PC-3 (cell line): ENCODE measurements at regions of chr4 and their contacts with region 1.

Region 1: GRCh38 chr4:108060164-108060563 is 70.5 kb downstream of the HADH start:
- DNase-seq: peak; percentile 41
- ATAC-seq: peak; percentile 35
- H3K4me3 ChIP-seq: no peak overlapping the region
- H3K27ac ChIP-seq: no peak overlapping the region
- H3K4me1 ChIP-seq: peaks cover 16% of the 10 kb centered on the region
- H3K27me3 ChIP-seq: no peaks in the 10 kb centered on the region
- CTCF ChIP-seq: peak; percentile 54

Region 2: DNA sequence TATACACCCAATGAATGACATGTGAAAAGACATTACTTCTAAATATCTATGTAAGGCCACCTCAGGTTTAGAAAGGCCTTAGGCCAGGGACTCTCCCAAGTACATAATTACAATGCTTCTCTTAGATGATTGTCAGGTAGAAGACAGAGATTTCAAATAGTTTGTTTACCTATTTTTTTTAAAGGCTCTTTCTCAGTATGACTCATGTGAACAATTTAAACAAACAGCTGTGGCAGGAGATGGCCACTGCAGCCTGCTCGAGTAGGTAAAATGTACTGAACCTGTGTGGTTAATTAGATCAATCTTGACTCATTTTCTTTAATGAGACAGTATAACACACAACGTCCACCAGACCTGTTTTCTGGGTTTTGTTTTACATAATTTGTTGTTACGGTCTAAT is 58.3 kb after region 1 on chr4:
- CTCF ChIA-PET with region 1: no interaction called
- POLR2A ChIA-PET with region 1: no interaction called
- intact Hi-C with region 1: loop called (anchors 2 kb)
- DNase-seq: peak; percentile 74
- ATAC-seq: peak; percentile 92
- H3K4me3 ChIP-seq: peak overlapping the region; percentile 33; the same call in 1 of the 2 replicates
- H3K27ac ChIP-seq: peak overlapping the region; percentile 81
- H3K4me1 ChIP-seq: peaks cover 26% of the 10 kb centered on the region
- H3K27me3 ChIP-seq: no peaks in the 10 kb centered on the region
- CTCF ChIP-seq: no peak

Region 3: DNA sequence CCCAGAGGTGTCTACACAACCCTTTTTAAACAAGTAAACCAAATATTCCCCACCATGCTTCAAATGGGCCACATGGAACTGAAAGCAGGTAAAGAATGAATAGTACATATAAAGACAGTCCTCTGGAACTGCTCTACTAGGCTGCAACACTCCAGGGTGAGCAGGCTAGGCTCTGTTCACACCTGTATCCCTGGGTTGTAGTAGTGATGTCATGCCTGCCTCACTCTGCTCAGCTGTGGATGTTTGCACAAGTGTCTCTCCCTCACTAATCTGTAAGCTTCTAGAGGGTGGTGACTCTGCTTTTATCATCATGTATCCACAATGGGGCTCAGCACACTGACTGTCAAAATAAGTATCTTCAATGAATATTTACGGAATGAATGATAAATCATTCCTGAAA is 88.2 kb after region 1 on chr4:
- CTCF ChIA-PET with region 1: no interaction called
- POLR2A ChIA-PET with region 1: no interaction called
- intact Hi-C with region 1: no loop called
- DNase-seq: no peak
- ATAC-seq: no peak
- H3K4me3 ChIP-seq: no peak overlapping the region
- H3K27ac ChIP-seq: no peak overlapping the region
- H3K4me1 ChIP-seq: no peaks in the 10 kb centered on the region
- H3K27me3 ChIP-seq: no peaks in the 10 kb centered on the region
- CTCF ChIP-seq: no peak

Region 4: GRCh38 chr4:108168671-108169523 is 108.7 kb after region 1 on chr4 and contains the start of gene LEF1:
- CTCF ChIA-PET with region 1: no interaction called
- POLR2A ChIA-PET with region 1: no interaction called
- intact Hi-C with region 1: loop called (anchors 10 kb)
- DNase-seq: peak; percentile 20
- ATAC-seq: peak; percentile 39
- H3K4me3 ChIP-seq: peak within 1 kb of the TSS; percentile 69
- H3K27ac ChIP-seq: no peak within 1 kb of the TSS
- H3K4me1 ChIP-seq: no peaks in the 10 kb centered on the region
- H3K27me3 ChIP-seq: peaks cover 73% of the 10 kb centered on the region
- CTCF ChIP-seq: no peak
- total RNA-seq, gene LEF1: 0.58 and 2.4 TPM in 2 replicates

Region 5: DNA sequence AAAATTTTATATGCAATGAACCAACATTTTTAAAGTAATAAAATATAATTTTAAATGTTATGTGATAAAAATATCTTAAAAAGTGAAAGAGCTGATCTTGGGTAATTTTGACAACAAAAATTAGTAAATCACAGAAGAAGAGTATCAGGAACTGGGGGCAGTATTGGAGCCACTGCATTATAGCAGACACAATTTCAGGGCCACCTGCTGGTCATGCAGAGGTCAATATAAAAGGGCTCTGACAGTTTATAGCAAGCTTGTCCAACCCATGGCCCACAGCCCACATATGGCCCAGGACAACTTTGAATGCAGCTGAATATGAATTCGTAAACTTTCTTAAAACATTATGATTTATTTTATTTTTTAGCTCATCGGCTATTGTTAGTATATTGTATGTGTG is 121.5 kb after region 1 on chr4:
- CTCF ChIA-PET with region 1: no interaction called
- POLR2A ChIA-PET with region 1: no interaction called
- intact Hi-C with region 1: loop called (anchors 1 kb)
- DNase-seq: no peak
- ATAC-seq: peak; percentile 58
- H3K4me3 ChIP-seq: no peak overlapping the region
- H3K27ac ChIP-seq: no peak overlapping the region
- H3K4me1 ChIP-seq: no peaks in the 10 kb centered on the region
- H3K27me3 ChIP-seq: no peaks in the 10 kb centered on the region
- CTCF ChIP-seq: peak; percentile 35

Region 6: DNA sequence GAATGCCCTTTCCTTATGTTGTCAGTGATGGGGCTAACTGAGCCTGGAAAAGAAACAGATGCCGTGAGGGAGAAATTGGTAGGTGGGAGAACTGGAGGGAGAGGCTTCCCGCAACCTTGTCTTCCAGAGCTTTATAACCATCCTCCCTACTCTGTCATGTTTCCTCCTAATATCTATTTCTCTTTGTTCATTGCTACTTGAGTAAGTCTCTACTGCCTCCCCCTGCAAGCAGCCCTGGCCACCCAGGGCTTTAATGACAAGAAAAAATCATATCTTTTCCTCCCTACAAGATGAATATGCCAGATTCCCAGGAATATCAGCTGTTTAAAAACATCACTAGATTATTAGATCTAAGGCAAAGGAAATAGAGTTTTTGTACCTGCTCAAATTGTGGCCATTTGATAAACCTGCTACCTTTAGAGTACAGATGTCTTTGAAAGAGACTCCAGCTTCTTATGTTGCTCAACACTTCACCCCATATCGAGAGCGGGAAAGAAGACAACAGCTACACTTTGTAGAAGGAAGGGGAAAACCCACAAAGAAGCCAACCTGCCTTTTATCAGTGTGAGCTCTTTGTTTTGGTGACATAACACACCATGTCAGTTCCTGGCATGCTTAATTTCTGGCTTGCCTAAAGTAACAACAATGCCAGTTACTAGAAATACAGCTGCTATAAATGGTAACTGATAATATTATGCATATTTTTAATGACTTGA is 295.2 kb after region 1 on chr4:
- CTCF ChIA-PET with region 1: no interaction called
- POLR2A ChIA-PET with region 1: no interaction called
- intact Hi-C with region 1: loop called (anchors 10 kb)
- DNase-seq: no peak
- ATAC-seq: no peak
- H3K4me3 ChIP-seq: no peak overlapping the region
- H3K27ac ChIP-seq: no peak overlapping the region
- H3K4me1 ChIP-seq: no peaks in the 10 kb centered on the region
- H3K27me3 ChIP-seq: no peaks in the 10 kb centered on the region
- CTCF ChIP-seq: no peak

Region 7: DNA sequence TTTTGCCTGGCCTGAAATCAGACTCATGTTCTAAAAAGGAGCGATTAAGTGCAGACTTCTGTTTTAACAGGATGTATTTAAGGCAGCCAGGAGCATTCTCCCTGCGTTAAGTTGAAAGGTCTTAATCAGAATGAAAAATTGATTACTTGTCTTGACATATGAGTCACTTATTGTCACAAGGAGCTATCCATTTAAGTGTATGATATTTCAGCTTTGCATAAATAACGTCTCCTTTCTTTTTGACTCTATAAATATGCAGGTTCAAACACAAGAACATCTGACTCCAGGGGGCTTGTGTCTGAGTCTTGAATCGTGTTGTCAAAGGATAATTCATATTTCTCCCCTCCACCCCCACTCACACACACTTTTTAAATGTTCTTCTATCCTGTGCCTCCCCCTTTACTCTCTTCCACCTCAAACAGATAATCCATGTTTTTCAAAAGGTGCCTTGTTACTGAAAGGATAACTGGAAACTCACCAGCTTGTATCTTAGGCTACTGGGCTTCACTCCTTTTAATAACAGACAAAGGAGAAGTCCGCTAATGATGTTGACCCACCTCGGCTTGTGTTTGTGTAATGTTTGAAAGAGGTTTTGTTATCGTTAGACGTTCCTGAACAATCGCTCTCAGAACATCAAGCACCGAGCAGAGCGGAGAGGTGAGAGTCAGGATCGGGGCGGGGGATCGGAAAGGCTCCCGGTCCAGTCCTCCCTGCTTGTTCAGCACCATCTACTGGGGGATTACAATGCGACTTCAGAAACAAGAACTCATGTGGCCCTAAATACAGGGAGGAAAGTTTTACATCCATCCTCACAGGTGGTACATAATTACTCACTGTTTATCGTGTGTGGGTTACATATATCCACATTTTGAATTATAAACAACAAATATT is 452.7 kb after region 1 on chr4:
- CTCF ChIA-PET with region 1: no interaction called
- POLR2A ChIA-PET with region 1: no interaction called
- intact Hi-C with region 1: loop called (anchors 2 kb)
- DNase-seq: peak; percentile 25
- ATAC-seq: peak; percentile 50; the same call in 1 of the 2 replicates
- H3K4me3 ChIP-seq: no peak overlapping the region
- H3K27ac ChIP-seq: no peak overlapping the region
- H3K4me1 ChIP-seq: no peaks in the 10 kb centered on the region
- H3K27me3 ChIP-seq: peaks cover 22% of the 10 kb centered on the region
- CTCF ChIP-seq: peak; percentile 45

Region 8: DNA sequence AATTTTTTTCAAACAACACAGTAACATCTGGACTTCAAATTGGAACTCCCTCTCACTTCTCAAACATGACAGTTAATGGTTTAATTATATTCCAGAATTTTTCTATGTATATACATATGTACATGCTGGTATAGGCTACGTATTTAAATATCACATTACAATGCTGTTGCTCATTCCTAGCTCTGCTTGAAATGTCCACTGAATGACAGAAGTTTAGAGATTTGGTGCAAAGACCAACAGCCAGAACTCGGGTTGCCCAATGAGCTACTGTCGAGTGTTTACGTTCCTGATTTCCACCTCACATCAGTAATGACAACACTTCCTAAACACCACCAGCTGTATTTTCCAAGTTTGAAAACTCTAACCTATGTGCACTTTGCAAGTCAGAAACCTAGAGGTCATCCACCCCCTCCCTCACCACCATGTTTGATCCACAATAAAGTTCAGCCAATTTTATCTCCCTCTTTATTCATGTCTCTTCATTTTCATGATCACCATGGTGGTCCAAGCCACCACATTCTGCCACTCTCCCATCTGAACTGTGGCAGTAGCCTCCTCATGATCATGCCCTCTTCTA is 510.9 kb after region 1 on chr4:
- CTCF ChIA-PET with region 1: no interaction called
- POLR2A ChIA-PET with region 1: no interaction called
- intact Hi-C with region 1: loop called (anchors 1 kb)
- DNase-seq: no peak
- ATAC-seq: no peak
- H3K4me3 ChIP-seq: no peak overlapping the region
- H3K27ac ChIP-seq: no peak overlapping the region
- H3K4me1 ChIP-seq: no peaks in the 10 kb centered on the region
- H3K27me3 ChIP-seq: 0 out of 2 replicates have a peak, but pooled peaks cover 17% of the 10 kb centered on the region
- CTCF ChIP-seq: no peak